IMR-90 (cell line): ENCODE measurements at regions of chr5 and their contacts with region 1.

Region 1: DNA sequence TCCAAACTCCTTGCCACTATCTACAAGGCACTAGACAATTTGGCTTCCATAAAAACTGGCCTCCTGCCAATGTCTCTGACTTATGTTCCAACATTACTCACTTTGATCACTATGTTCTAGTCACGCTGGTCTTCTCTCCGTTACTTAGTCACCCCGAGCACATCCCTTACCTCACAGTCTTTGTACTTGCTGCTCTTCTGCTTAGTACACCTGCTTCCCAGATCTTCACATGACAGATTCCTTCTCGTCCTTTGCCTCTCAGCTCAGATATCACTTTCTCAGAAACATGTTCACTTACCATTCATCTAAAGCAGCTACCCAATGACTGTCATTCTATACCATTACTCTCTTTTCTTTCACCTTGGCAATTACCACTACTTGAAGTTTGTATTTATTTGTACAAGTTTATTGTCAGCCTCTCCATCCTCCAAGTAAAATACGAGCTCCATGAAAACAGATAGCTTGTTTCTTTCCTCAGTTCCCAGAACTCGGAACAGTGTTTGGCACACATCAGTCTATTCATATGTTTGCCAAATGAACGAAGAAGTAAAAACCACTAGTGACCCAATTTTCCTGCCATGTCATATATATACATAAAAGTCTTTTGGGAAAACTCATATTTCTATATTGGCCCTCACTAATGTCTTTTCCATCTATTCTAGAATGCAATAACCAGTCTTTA is 5.9 kb upstream of the SLC22A5 start:
- DNase-seq: peak; percentile 93
- ATAC-seq: peak; percentile 55
- H3K4me3 ChIP-seq: no peak overlapping the region
- H3K27ac ChIP-seq: no peak overlapping the region
- H3K4me1 ChIP-seq: peaks cover 4% of the 10 kb centered on the region; the same call in 1 of the 2 replicates
- H3K27me3 ChIP-seq: peaks cover 2% of the 10 kb centered on the region; the same call in 1 of the 2 replicates
- CTCF ChIP-seq: no peak
- POLR2A ChIP-seq: no peak
- RAD21 ChIP-seq: no peak

Region 2: GRCh38 chr5:131622633-131623032 is 740.9 kb before region 1 on chr5:
- CTCF ChIA-PET with region 1: no interaction called
- POLR2A ChIA-PET with region 1: no interaction called
- dilution Hi-C with region 1: no loop called
- in situ Hi-C with region 1: no loop called
- intact Hi-C with region 1: no loop called
- DNase-seq: peak; percentile 79
- ATAC-seq: peak; percentile 67
- H3K4me3 ChIP-seq: no peak overlapping the region
- H3K27ac ChIP-seq: no peak overlapping the region
- H3K4me1 ChIP-seq: no peaks in the 10 kb centered on the region
- H3K27me3 ChIP-seq: no peaks in the 10 kb centered on the region
- CTCF ChIP-seq: no peak
- POLR2A ChIP-seq: no peak
- RAD21 ChIP-seq: no peak

Region 3: GRCh38 chr5:132277971-132278911 is 85.3 kb before region 1 on chr5:
- CTCF ChIA-PET with region 1: no interaction called
- POLR2A ChIA-PET with region 1: no interaction called
- dilution Hi-C with region 1: no loop called
- in situ Hi-C with region 1: no loop called
- intact Hi-C with region 1: no loop called
- DNase-seq: no peak
- ATAC-seq: no peak
- H3K4me3 ChIP-seq: no peak overlapping the region
- H3K27ac ChIP-seq: no peak overlapping the region
- H3K4me1 ChIP-seq: peaks cover 1% of the 10 kb centered on the region; the same call in 1 of the 2 replicates
- H3K27me3 ChIP-seq: peaks cover 5% of the 10 kb centered on the region
- CTCF ChIP-seq: no peak
- POLR2A ChIP-seq: no peak
- RAD21 ChIP-seq: no peak

Region 4: DNA sequence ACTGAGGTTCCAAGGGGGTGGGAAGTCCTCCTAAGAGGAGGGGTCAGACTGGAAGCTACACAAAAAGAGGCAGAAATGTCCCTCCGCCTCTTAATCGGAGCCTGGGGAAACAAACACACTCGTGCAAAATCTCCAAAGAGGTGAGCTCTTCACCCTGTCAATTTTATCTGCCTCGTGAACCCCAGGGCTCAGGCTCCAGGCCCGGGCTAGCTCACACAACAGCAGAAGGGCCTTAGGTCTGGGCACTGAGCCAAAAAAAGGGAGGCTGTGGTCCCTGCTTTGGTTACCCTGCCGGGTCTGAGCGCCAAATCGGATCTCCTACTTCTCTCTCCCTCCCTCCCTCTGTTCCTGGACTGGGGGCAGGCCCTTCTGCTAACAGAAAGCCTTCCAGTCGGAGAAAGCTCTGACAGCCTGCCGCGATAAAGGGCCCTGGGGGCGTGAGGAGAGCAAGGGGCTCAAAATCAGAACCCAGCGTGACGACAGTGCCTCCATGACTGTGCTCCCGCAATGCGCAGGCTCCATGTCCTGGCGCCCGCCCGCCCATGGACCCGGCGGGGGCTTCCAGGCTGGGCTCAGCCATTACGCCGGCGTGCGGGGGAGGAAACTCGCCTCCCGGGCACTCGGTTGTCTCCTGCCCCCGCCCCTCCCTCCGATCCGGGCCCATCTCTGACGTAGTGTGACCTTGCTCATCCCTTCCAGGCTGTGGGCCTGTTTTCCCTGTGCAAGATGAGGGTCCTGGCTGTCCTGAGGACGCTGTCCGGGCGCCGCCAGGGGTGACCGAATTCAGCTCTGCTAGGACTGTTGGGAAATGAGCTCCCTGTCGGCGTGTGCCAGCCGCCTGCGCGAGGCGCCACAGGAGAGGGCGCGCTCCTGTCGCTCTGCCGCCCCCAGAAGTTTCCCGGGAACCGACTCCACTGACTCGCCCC is 70.2 kb before region 1 on chr5:
- CTCF ChIA-PET with region 1: no interaction called
- POLR2A ChIA-PET with region 1: no interaction called
- dilution Hi-C with region 1: no loop called
- in situ Hi-C with region 1: no loop called
- intact Hi-C with region 1: loop called (anchors 2 kb)
- DNase-seq: peak; percentile 87
- ATAC-seq: peak; percentile 59
- H3K4me3 ChIP-seq: peak overlapping the region; percentile 74
- H3K27ac ChIP-seq: peak overlapping the region; percentile 99
- H3K4me1 ChIP-seq: peaks cover 12% of the 10 kb centered on the region
- H3K27me3 ChIP-seq: no peaks in the 10 kb centered on the region
- CTCF ChIP-seq: 0 out of 2 replicates have a peak, but pooled peaks have one; percentile 21
- POLR2A ChIP-seq: peak; percentile 63
- RAD21 ChIP-seq: no peak; the same call in 1 of the 2 replicates